Ascending aorta (tissue), 2 donors: ENCODE measurements at regions of chr21 and their contacts with region 1.

Region 1: GRCh38 chr21:41121785-41122421 is 46.1 kb upstream of the BACE2 start:
- DNase-seq: peak; percentile 38 to 94
- H3K4me3 ChIP-seq: no peak overlapping the region
- H3K27ac ChIP-seq: no peak overlapping the region
- H3K4me1 ChIP-seq: peaks cover 0 to 10% of the 10 kb centered on the region in 2 donors
- H3K27me3 ChIP-seq: no peaks in the 10 kb centered on the region
- CTCF ChIP-seq: peak; percentile 77 to 94 (median 90)

Region 2: DNA sequence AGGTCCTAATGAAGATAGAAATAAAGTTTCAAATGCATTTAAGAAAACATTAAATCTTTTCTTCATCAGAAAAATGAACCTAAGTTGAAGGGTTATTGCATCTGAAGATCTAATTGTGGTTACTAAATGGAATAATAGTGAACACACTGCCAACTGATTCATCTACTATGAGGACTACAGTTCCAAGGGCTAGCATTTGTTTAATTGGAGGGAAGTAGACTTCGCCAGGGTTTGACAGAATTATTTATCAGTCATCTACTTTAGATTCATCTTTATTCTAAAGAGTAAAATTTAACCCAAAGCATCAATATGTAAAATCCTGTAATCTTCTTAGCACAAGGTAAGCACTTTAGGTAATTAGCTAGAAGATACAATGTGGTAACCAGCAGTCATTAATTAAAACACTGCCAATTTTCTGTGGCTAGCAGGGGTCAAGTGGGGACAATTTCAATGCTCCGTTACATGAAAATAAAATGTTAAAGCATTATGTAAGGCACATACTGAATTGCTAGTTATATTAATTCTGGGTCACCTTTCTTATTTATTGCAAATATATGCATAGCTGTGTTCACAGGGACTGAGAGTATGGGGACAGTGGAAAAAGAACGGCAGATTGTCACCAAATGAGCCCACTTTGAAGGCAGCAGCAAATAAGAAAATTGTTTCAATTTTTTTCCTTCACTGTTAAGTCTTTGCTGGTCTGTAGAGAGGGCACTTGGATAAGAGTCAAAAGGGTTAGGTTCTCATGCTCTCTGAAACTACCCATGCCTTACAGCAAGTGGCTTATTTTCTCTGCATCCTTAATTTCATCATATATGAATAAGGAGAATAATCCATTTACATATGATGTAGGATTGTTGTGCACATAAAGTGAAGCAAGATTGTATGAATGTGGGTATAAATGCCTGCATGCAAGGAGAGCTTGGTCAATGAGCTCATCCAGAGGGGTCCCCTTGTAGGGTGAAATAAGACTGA is 838.7 kb before region 1 on chr21:
- intact Hi-C with region 1: no loop called
- DNase-seq: no peak
- H3K4me3 ChIP-seq: no peak overlapping the region
- H3K27ac ChIP-seq: no peak overlapping the region
- H3K4me1 ChIP-seq: no peaks in the 10 kb centered on the region
- H3K27me3 ChIP-seq: no peaks in the 10 kb centered on the region
- CTCF ChIP-seq: no peak

Region 3: DNA sequence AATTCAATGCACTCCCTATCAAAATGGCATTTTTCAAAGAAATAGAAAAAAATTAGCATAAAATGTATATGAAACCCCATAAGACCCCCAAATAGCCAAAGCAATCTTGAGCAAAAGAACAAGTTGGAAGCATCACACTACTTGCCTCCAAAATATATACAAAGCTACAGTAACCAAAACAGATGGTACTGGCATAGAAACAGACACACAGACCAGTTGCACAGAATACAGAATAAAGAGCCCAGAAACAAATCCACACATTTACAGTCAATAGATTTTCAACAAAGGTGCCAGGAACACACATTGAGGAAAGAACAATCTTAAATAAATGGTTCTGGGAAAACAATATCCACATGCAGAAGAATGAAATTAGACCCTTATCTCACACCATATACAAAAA is 625.8 kb before region 1 on chr21:
- intact Hi-C with region 1: no loop called
- DNase-seq: no peak
- H3K4me3 ChIP-seq: no peak overlapping the region
- H3K27ac ChIP-seq: no peak overlapping the region
- H3K4me1 ChIP-seq: no peaks in the 10 kb centered on the region
- H3K27me3 ChIP-seq: no peaks in the 10 kb centered on the region
- CTCF ChIP-seq: no peak

Region 4: DNA sequence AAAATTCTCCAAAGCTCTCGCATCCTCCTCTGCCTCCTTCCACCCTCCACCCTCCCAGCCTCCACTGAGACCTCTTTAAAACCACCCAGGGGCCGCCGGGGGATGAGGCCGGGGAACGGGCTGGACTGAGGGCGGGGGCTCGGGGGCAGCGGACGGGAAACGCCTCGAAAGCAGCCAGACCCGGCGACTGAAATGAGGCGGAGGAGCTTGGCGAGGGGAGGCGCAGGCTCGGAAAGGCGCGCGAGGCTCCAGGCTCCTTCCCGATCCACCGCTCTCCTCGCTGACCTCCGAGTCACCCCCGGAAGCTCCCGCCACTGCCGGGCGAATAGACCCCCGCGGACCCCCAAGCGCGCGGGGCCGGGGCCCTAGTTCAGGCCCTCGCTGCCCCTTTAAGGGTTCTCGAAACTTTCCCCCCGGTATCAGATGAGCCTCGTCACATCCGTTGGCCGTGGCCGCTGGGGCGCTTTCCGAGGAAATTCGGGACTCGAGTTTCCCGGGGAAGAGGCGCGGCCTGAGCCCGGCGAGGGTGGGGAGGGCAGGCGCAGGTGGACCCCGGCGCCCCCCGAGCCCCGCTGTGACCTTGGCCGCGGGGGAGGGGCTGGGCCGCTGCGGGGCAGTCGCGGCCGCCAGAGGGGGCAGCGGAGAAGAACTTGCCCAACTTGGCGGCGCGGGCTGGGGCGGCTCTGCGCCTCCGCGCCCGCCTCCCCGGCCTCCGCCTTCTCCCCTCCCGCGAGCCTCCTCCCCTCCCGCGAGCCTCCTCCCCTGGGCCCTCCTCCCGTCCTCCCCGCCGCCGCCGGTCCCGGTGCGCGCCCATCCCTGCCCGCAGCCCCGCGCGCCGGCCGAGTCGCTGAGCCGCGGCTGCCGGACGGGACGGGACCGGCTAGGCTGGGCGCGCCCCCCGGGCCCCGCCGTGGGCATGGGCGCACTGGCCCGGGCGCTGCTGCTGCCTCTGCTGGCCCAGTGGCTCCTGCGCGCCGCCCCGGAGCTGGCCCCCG is 45.7 kb after region 1 on chr21 and contains the start of gene BACE2:
- intact Hi-C with region 1: loop called (anchors 1 kb)
- DNase-seq: peak in 1 of 2 donors; percentile 91
- H3K4me3 ChIP-seq: peak within 1 kb of the TSS; percentile 92 to 99
- H3K27ac ChIP-seq: peak within 1 kb of the TSS; percentile 98 to 99
- H3K4me1 ChIP-seq: peaks cover 0 to 17% of the 10 kb centered on the region in 2 donors
- H3K27me3 ChIP-seq: no peaks in the 10 kb centered on the region
- CTCF ChIP-seq: peak; percentile 29 to 68 (median 60)
- total RNA-seq, gene BACE2: 151 TPM

Region 5: GRCh38 chr21:41283211-41283818 is 161.4 kb after region 1 on chr21:
- intact Hi-C with region 1: loop called (anchors 2 kb)
- DNase-seq: peak in 1 of 2 donors; percentile 70
- H3K4me3 ChIP-seq: no peak overlapping the region
- H3K27ac ChIP-seq: no peak overlapping the region
- H3K4me1 ChIP-seq: no peaks in the 10 kb centered on the region
- H3K27me3 ChIP-seq: no peaks in the 10 kb centered on the region
- CTCF ChIP-seq: peak; percentile 67 to 82 (median 76)

Region 6: GRCh38 chr21:41406340-41406739 is 284.4 kb after region 1 on chr21:
- intact Hi-C with region 1: no loop called
- DNase-seq: no peak
- H3K4me3 ChIP-seq: no peak overlapping the region
- H3K27ac ChIP-seq: no peak overlapping the region
- H3K4me1 ChIP-seq: no peaks in the 10 kb centered on the region
- H3K27me3 ChIP-seq: no peaks in the 10 kb centered on the region
- CTCF ChIP-seq: no peak

Region 7: DNA sequence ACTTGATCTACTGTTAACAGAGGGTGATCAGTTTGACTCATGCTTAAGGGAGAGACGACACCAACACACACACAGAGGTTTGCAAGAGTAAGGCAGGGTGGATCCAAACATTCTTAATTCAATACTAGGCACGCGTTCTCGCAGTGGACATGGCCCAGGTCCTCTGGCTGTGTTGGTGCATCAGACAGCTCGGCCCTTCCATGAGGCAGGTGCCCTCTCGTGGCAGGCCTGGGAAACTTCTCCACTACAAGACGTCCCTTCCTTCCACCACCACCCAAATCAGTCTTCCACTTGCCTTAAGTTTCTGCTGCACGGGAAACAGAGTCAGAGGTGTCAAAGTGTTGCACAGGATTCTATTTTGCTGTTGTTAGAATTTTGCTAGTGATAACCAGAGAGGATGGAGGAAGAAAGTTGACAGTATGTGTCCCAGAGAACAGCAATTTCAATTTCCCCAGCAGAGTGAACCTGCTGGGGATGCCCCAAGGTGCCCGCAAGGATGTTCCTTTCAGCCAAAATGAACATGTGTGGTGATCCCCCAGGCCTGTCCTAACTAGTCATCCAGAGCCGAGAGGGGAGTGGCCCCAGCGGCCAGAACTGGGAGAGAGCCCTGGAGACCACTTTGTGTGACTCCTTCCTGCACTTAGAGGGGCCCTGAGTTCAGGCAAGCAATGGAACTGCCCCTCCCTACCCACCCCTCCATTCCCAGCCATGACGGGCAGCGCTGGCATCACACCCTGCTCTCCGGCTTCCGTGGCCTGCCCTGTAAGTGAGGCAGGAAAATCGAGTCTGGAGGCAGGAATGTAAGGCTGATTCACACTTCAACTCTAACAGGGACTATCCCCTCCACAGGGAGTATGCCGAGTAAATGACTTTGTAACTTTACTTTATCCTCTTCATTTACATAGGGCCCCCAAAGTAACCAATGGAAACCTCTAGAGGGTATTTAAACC is 338.9 kb after region 1 on chr21:
- intact Hi-C with region 1: loop called (anchors 2 kb)
- DNase-seq: peak; percentile 26 to 83
- H3K4me3 ChIP-seq: no peak overlapping the region
- H3K27ac ChIP-seq: no peak overlapping the region
- H3K4me1 ChIP-seq: no peaks in the 10 kb centered on the region
- H3K27me3 ChIP-seq: no peaks in the 10 kb centered on the region
- CTCF ChIP-seq: peak; percentile 63 to 78 (median 75)